Activated CD4-positive, alpha-beta T cell treated with anti-CD3 and anti-CD28 coated beads, Interleukin-2, amount 10 ng/mL, durations not matched to agents 7 days and 5 days (primary cell): ENCODE measurements at regions of chr4 and their contacts with region 1.

Region 1: DNA sequence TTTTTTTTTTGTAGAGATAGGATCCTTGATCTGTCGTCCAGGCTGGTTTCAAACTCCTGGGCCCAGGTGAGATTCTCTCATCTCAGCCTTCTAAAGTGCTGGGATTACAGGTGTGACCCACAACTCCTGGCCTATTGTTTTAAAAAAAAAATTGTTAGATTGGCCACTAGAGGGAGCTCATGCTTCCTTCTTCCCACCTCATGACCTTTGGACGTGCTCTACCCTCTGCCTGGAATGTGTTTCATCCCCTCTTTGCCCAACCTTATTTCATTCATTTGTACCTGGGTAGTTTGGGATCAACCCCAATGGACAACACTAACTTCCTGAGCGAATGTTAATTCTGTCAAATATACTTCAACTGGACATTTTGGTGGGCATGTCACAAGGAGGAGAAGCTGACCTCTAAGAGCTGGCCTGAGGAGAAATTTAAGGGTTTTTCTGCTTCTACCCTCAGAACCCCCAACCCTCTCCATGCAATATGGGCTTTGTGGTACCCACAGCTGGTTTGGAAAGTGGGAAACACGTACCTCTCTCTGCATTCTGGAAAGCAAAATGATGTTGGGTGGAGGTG is 6.4 kb downstream of the PPEF2 start:
- DNase-seq: peak; percentile 20
- H3K4me3 Mint-ChIP-seq: no peak overlapping the region
- H3K27ac Mint-ChIP-seq: no peak overlapping the region
- H3K4me1 Mint-ChIP-seq: no peaks in the 10 kb centered on the region
- H3K27me3 Mint-ChIP-seq: peaks cover 8% of the 10 kb centered on the region

Region 2: DNA sequence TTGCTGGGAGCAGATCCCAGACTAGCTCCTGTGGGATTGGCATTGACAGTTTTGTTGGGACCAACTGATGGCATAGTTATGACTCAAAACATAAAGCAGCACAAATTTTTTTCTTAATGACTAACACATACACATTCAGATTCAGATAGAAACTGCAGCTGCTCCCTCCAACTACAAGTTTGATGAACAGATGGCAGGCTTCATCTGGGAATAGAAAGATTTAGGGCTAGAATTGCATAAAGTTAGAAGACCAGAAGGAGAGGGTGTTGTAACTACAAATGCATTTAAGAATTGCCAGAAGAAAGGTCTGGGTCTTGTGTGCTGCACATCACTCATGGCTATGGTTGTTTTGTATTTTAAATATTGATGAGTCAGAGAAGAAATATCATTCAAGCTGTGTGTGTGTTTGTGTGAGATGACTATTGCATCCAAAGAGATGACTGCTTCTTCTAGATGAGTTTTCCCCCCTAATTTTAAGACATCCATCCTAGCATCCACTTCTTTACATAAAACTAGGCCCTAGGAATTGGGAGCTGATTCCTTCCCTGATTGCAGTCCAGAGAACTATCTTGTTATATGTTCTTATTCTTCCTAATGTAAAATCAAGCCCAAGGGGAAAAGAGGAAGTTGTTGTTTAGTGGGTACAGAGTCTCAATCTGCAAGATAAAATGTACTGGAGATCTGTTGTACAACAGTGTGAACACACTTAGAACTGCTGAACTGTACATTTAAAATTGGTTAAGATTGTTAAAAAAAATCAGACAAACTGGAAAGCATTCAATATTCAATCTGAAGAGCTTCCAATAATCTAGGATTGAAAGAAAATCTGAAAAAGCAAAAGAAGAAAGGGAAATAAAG is 787.8 kb before region 1 on chr4:
- CTCF ChIA-PET with region 1: no interaction called
- POLR2A ChIA-PET with region 1: no interaction called
- DNase-seq: no peak
- H3K4me3 Mint-ChIP-seq: no peak overlapping the region
- H3K27ac Mint-ChIP-seq: no peak overlapping the region
- H3K4me1 Mint-ChIP-seq: no peaks in the 10 kb centered on the region
- H3K27me3 Mint-ChIP-seq: no peaks in the 10 kb centered on the region

Region 3: GRCh38 chr4:75908555-75908954 is 12.7 kb after region 1 on chr4:
- CTCF ChIA-PET with region 1: interaction called, 20 read pairs
- POLR2A ChIA-PET with region 1: no interaction called
- DNase-seq: no peak
- H3K4me3 Mint-ChIP-seq: no peak overlapping the region
- H3K27ac Mint-ChIP-seq: no peak overlapping the region
- H3K4me1 Mint-ChIP-seq: no peaks in the 10 kb centered on the region
- H3K27me3 Mint-ChIP-seq: no peaks in the 10 kb centered on the region

Region 4: GRCh38 chr4:75930152-75930551 is 34.3 kb after region 1 on chr4:
- CTCF ChIA-PET with region 1: no interaction called
- POLR2A ChIA-PET with region 1: no interaction called
- DNase-seq: no peak
- H3K4me3 Mint-ChIP-seq: no peak overlapping the region
- H3K27ac Mint-ChIP-seq: no peak overlapping the region
- H3K4me1 Mint-ChIP-seq: no peaks in the 10 kb centered on the region
- H3K27me3 Mint-ChIP-seq: no peaks in the 10 kb centered on the region

Region 5: DNA sequence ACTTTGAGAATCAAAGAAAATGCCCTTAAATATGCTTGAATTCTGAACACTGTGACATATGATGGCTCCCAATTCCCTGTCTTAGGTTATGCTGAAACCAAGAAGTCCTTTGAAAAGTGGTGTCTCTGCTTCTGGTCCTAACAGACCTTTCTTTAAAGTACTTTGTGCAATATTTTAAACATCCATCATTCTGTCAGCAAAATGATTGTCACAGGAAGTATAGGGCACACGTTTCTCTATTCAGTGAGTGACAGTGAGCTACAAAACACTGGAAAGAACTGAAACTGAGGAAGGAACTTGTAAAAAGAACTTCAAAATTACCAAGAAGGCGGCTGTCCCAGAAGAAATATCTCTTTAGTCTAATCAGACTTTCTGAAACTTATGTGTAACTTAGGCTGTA is 264.5 kb after region 1 on chr4:
- CTCF ChIA-PET with region 1: no interaction called
- POLR2A ChIA-PET with region 1: no interaction called
- DNase-seq: no peak
- H3K4me3 Mint-ChIP-seq: no peak overlapping the region
- H3K27ac Mint-ChIP-seq: no peak overlapping the region
- H3K4me1 Mint-ChIP-seq: no peaks in the 10 kb centered on the region
- H3K27me3 Mint-ChIP-seq: no peaks in the 10 kb centered on the region